Adrenal gland (tissue), 19 donors: ENCODE measurements at regions of chr16 and their contacts with region 1.

Region 1: GRCh38 chr16:68328151-68328859 is 17.5 kb downstream of the PRMT7 start:
- DNase-seq: peak; percentile 78 to 93 (median 87)
- H3K4me3 ChIP-seq: no peak overlapping the region
- H3K27ac ChIP-seq: no peak overlapping the region
- H3K4me1 ChIP-seq: peaks cover 13 to 33% of the 10 kb centered on the region in 2 donors
- H3K27me3 ChIP-seq: no peaks in the 10 kb centered on the region
- CTCF ChIP-seq: peak; percentile 90 to 98 (median 96)
- POLR2A ChIP-seq: no peak

Region 2: DNA sequence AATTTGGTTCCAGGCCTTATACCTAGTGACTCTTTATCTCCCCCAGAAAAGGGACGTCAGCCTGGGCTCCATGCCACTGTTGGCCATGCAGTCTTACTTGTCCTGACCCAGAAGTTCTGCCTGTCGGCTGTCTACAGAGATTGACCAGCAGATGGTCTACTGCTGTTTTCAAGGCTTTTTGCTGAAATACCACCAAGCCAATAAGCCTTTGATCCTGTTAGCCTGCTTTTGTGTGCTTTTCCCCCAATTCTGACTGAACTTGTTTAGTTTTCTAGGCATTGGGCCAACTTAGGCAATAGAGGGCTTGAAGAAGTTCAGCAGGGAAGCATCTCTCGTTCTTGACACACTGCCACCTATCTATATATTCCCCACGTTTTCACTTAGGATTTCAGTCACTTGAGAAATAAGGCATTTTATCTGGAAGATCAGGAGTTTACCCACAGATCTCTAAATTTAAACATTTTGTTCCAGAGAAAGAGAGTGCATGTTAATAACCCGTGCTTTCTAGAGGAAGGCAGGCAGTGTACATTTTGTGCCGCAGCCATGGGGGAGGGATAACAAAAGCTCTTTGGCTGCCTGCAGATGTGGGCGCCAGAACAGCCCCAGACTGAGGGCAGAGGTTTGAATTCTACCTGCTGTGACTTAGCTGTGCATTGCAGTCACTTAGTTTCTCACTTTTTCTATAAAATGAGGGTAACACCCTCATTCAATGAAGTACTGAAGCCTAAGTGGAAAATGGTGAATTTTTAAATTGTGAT is 695.7 kb before region 1 on chr16:
- intact Hi-C with region 1: no loop called
- DNase-seq: peak in 1 of 7 donors; percentile 18
- H3K4me3 ChIP-seq: no peak overlapping the region
- H3K27ac ChIP-seq: no peak overlapping the region
- H3K4me1 ChIP-seq: no peaks in the 10 kb centered on the region
- H3K27me3 ChIP-seq: no peaks in the 10 kb centered on the region
- CTCF ChIP-seq: no peak
- POLR2A ChIP-seq: no peak

Region 3: GRCh38 chr16:68074850-68075555 is 253.3 kb before region 1 on chr16:
- intact Hi-C with region 1: no loop called
- DNase-seq: no peak
- H3K4me3 ChIP-seq: no peak overlapping the region
- H3K27ac ChIP-seq: no peak overlapping the region
- H3K4me1 ChIP-seq: peaks cover 26 to 40% of the 10 kb centered on the region in 2 donors
- H3K27me3 ChIP-seq: no peaks in the 10 kb centered on the region
- CTCF ChIP-seq: no peak
- POLR2A ChIP-seq: no peak

Region 4: DNA sequence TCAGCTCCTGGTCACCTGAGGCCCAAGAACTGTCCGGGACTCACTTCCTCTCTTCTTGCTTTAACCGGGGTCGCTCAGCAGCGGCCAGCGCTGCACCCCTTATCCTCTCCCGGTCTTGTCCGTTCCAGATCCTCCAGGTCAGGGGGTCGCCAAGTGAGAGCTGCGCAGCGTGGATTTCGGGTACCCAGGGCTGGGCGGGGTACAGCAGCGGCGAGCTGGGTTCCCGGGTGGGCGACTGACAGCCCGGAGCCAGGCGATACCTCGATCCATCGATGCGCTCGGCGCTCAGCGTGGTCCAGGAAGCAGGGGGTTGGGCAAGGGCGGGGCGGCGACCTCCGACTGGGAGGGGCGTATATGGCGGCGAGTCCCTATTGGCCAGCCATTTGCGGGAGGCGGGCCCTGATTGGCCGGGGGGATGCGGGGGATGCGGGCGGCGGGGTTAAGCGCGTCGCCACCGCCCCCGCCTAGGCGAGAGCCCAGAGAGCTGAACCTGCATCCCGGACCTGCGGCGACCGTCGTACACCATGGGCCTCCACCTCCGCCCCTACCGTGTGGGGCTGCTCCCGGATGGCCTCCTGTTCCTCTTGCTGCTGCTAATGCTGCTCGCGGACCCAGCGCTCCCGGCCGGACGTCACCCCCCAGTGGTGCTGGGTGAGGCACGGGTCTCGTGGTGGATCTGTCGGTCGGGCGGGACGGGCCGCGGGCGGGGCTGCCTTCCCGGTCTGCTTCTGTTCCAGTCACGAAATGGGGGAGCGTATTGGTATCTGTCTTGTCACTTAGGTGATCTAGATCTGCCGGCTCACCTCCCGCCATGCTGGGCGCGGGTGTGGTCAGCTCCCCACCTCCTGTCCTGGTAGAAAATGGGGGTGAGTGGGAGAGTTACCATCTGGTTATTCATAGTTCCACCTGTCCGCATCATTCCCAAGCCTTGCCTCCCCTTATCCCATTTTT is 83.1 kb before region 1 on chr16 and contains the start of gene PLA2G15:
- intact Hi-C with region 1: loop called in 1 of 2 experiments (anchors 5 kb)
- DNase-seq: peak; percentile 95 to 98 (median 97)
- H3K4me3 ChIP-seq: peak within 1 kb of the TSS; percentile 73 to 99 (median 90)
- H3K27ac ChIP-seq: peak within 1 kb of the TSS in 4 of 5 donors; percentile 27 to 67 (median 44)
- H3K4me1 ChIP-seq: peaks cover 12 to 35% of the 10 kb centered on the region in 2 donors
- H3K27me3 ChIP-seq: no peaks in the 10 kb centered on the region
- CTCF ChIP-seq: no peak
- POLR2A ChIP-seq: peak in 1 of 2 donors; percentile 75
- total RNA-seq, gene PLA2G15: 10.4 to 37.1 (median 27.2) TPM

Region 5: DNA sequence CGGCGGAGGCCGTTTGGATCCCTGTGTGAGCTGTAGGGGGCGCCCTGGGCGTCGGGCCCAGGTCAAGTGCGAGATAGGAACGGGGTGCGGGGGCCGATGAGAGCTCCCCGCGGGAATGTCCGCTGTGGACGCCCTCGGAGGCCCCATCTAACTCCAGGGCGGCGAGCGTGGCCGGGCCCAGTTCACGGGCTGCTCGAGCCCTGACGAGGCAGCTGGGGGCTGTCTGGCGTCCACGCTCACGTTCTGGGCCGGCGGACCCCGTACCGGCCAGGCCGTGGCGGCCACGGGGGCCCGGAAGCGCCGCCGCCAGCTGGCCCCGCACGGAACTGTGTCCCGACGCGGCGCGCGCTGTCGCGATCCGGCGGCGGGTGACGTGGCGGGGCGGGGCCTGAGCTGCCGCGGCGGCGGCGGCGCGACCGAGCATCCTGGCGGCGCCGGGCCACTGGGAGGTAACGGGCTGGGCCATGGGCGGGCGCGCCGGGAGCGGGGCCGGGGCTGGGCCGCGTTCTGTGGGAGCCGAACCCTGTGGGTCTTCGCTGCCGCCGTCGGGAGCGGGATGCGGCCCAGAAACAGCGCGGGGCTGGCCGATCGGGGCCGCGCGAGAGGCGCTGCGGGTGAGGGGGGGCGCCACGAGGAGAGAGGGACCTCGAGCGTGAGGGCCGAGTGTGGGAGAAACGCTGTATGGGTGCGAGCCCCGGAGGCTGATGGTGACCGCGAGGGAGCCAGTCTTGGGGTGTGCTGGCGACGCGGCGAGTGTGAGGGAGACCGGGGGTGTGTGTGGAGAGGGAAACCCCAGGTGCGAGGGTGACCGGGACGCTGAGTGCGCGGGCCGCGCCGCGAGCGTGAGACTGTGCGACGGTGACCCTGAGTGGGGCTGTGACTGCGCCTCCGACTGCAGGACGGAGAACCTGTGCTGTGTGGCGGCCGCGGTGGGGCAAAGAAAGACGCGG is 63.9 kb before region 1 on chr16 and contains the start of gene SLC7A6:
- intact Hi-C with region 1: loop called (anchors 2 to 5 kb)
- DNase-seq: peak; percentile 71 to 86 (median 80)
- H3K4me3 ChIP-seq: peak within 1 kb of the TSS; percentile 78 to 88 (median 86)
- H3K27ac ChIP-seq: peak within 1 kb of the TSS; percentile 93 to 100 (median 98)
- H3K4me1 ChIP-seq: peaks cover 11 to 27% of the 10 kb centered on the region in 2 donors
- H3K27me3 ChIP-seq: no peaks in the 10 kb centered on the region
- CTCF ChIP-seq: peak; percentile 35 to 75 (median 66)
- POLR2A ChIP-seq: peak; percentile 34 to 84
- total RNA-seq, gene SLC7A6: 2.0 to 54.7 (median 22.5) TPM

Region 6: GRCh38 chr16:68499006-68499405 is 170.7 kb after region 1 on chr16:
- intact Hi-C with region 1: no loop called
- DNase-seq: peak in 1 of 7 donors; percentile 11
- H3K4me3 ChIP-seq: no peak overlapping the region
- H3K27ac ChIP-seq: no peak overlapping the region
- H3K4me1 ChIP-seq: no peaks in the 10 kb centered on the region
- H3K27me3 ChIP-seq: no peaks in the 10 kb centered on the region
- CTCF ChIP-seq: no peak
- POLR2A ChIP-seq: no peak